Common myeloid progenitor, CD34-positive (primary cell): ENCODE measurements at regions of chr9 and their contacts with region 1.

Region 1: GRCh38 chr9:121179930-121180681 is 21.6 kb downstream of the RAB14 start:
- DNase-seq: no peak
- H3K4me3 ChIP-seq: no peak overlapping the region
- H3K27ac ChIP-seq: no peak overlapping the region
- H3K4me1 ChIP-seq: peaks cover 13 to 31% (median 22%) of the 10 kb centered on the region in 4 experiments
- H3K27me3 ChIP-seq: no peaks in the 10 kb centered on the region

Region 2: DNA sequence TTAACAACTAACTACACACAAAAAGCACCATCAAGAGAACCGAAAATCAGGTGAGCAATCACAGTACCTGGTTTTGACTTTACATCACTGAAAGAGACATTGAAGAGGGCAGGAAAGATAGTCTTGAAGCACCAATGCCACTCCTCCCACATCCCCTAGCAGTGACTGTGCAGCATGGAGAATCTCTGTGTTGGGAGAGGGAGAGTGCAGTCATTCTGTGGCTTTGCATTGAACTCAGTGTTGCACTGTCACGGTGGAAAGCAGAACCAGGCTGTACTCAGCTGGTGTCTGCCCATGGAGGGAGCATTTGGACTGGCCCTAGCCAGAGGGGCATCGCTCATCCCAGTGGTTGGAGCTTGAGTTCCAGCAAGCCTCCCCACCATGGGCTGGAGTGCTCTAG is 170.5 kb before region 1 on chr9:
- CTCF ChIA-PET with region 1: no interaction called
- POLR2A ChIA-PET with region 1: no interaction called
- DNase-seq: peak in 2 of 3 donors; percentile 48 to 60
- H3K4me3 ChIP-seq: no peak overlapping the region
- H3K27ac ChIP-seq: no peak overlapping the region
- H3K4me1 ChIP-seq: no peaks in the 10 kb centered on the region
- H3K27me3 ChIP-seq: no peaks in the 10 kb centered on the region

Region 3: DNA sequence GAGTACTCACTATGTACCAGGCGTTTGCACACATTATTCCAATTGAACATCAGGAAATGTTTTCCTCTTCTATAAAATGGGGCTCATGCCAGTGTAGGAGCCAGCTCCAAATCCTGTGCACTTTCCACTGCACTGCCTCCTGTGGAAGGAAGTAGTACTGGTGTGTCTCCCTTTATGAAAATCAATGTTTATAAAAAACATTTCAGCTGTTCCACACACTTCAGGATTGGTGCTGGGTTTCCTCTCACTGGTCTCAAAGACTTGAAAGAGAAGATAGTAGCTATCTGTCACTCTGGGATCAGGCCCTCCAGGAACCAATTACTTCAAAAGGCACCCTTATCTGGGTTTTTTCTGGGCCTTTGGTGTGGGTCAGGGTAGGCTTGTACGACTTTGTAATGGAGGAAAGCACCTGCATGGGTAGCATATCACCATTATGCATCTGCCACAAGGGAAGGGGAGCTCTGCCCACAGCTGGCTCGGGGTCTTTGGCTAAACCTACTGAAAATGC is 11.0 kb before region 1 on chr9:
- CTCF ChIA-PET with region 1: interaction called, 36 read pairs
- POLR2A ChIA-PET with region 1: interaction called, 3 read pairs
- DNase-seq: peak in 2 of 3 donors; percentile 36 to 40
- H3K4me3 ChIP-seq: no peak overlapping the region
- H3K27ac ChIP-seq: no peak overlapping the region
- H3K4me1 ChIP-seq: no peaks in the 10 kb centered on the region
- H3K27me3 ChIP-seq: no peaks in the 10 kb centered on the region